ENCODE measurements at regions of chr1 and their contacts with region 1.

Region 1: DNA sequence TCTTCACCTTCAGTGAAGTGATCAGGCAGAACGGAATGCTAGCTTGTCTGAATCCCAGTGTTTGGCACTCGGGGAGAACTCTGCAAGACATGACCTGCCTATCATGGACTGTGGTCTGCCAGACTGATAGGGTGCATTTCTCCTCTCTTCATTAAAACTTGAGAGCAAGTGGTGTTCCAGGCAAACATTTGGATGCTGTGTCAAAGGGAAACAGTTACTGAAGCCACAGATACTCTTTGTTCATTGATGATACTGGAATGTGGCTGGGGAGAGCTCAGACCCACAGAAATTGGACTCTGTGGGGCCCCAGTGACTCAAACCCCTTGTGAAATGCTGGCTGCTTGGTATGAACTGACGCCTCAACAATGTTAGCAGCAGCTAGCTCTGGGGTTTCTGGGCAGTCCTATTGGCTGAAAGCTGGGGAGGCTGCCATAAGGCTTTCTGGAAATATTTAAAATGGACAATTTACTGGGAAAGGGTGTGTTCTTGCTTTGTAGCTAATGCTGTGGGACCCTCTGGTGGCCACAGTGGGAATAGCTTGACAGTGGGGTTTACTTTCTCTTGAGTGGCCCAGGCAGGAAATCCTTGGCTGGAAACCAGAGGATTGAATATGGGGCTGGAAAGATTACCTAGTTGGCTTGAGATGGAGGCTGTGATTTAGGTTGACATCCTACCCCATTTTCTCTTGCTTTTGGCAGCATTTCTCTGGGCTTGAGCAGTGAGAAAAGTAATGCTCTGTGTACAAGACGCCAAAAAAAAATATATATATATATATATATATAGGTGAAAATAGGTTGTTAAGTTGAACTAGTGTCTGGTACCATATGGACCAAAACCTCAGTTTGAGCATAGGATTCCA is 8.0 kb upstream of the S100A10 start:
- DNase-seq: peak; percentile 88
- ATAC-seq: peak; percentile 86
- H3K4me3 Mint-ChIP-seq: no peak overlapping the region
- H3K27ac Mint-ChIP-seq: no peak overlapping the region
- H3K4me1 Mint-ChIP-seq: peaks cover 4% of the 10 kb centered on the region
- H3K27me3 Mint-ChIP-seq: peaks cover 11% of the 10 kb centered on the region
- CTCF ChIP-seq: peak; percentile 92

Region 2: DNA sequence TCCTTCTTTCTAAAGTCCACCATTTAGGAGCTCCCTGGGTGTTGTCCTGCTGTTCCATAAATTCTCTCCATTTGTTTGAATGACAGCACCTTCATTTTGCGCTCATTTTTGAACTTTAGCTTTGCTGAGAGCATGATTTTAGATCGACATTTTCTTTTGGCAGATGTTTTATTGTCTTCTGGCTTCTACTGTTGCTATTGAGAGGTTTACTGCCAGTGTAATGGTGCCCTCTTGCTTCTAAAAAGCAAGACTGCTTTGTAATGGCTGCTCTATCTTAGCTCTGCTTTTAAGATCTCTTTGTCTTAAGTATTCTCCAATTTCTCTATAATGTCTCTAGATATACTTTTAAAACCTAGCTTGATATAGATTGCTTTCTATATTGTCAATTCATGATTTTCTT is 120.2 kb before region 1 on chr1:
- CTCF ChIA-PET with region 1: interaction called, 26 read pairs
- POLR2A ChIA-PET with region 1: no interaction called
- intact Hi-C with region 1: no loop called
- DNase-seq: no peak
- ATAC-seq: no peak
- H3K4me3 Mint-ChIP-seq: no peak overlapping the region
- H3K27ac Mint-ChIP-seq: no peak overlapping the region
- H3K4me1 Mint-ChIP-seq: no peaks in the 10 kb centered on the region
- H3K27me3 Mint-ChIP-seq: no peaks in the 10 kb centered on the region
- CTCF ChIP-seq: no peak

Region 3: GRCh38 chr1:151924679-151925587 is 76.7 kb before region 1 on chr1:
- CTCF ChIA-PET with region 1: interaction called, 287 read pairs
- POLR2A ChIA-PET with region 1: no interaction called
- intact Hi-C with region 1: loop called (anchors 5 kb)
- DNase-seq: no peak
- ATAC-seq: peak; percentile 64
- H3K4me3 Mint-ChIP-seq: no peak overlapping the region
- H3K27ac Mint-ChIP-seq: peak overlapping the region; percentile 36
- H3K4me1 Mint-ChIP-seq: peaks cover 16% of the 10 kb centered on the region
- H3K27me3 Mint-ChIP-seq: no peaks in the 10 kb centered on the region
- CTCF ChIP-seq: no peak

Region 4: GRCh38 chr1:151968058-151968457 is 33.6 kb before region 1 on chr1:
- CTCF ChIA-PET with region 1: interaction called, 321 read pairs
- POLR2A ChIA-PET with region 1: interaction called, 4 read pairs
- intact Hi-C with region 1: loop called (anchors 1 kb)
- DNase-seq: peak; percentile 69
- ATAC-seq: peak; percentile 88
- H3K4me3 Mint-ChIP-seq: no peak overlapping the region
- H3K27ac Mint-ChIP-seq: no peak overlapping the region
- H3K4me1 Mint-ChIP-seq: peaks cover 22% of the 10 kb centered on the region
- H3K27me3 Mint-ChIP-seq: peaks cover 5% of the 10 kb centered on the region
- CTCF ChIP-seq: peak; percentile 81

Region 5: GRCh38 chr1:152029144-152029928 is 27.7 kb after region 1 on chr1:
- CTCF ChIA-PET with region 1: interaction called, 14 read pairs
- POLR2A ChIA-PET with region 1: no interaction called
- intact Hi-C with region 1: loop called (anchors 2 kb)
- DNase-seq: peak; percentile 54
- ATAC-seq: peak; percentile 60
- H3K4me3 Mint-ChIP-seq: no peak overlapping the region
- H3K27ac Mint-ChIP-seq: peak overlapping the region; percentile 91
- H3K4me1 Mint-ChIP-seq: peaks cover 34% of the 10 kb centered on the region
- H3K27me3 Mint-ChIP-seq: no peaks in the 10 kb centered on the region
- CTCF ChIP-seq: no peak

Region 6: GRCh38 chr1:152110860-152111514 is 109.4 kb after region 1 on chr1:
- CTCF ChIA-PET with region 1: no interaction called
- POLR2A ChIA-PET with region 1: no interaction called
- intact Hi-C with region 1: no loop called
- DNase-seq: peak; percentile 43
- ATAC-seq: peak; percentile 66
- H3K4me3 Mint-ChIP-seq: no peak overlapping the region
- H3K27ac Mint-ChIP-seq: no peak overlapping the region
- H3K4me1 Mint-ChIP-seq: peaks cover 4% of the 10 kb centered on the region
- H3K27me3 Mint-ChIP-seq: peaks cover 19% of the 10 kb centered on the region
- CTCF ChIP-seq: no peak